Mammary epithelial cell (primary cell): ENCODE measurements at regions of chr1 and their contacts with region 1.

Region 1: GRCh38 chr1:230066466-230067404 is at the start of gene GALNT2:
- DNase-seq: peak; percentile 85
- H3K4me3 ChIP-seq: peak within 1 kb of the TSS; percentile 82 to 85 (median 83)
- H3K27ac ChIP-seq: peak within 1 kb of the TSS; percentile 71
- H3K4me1 ChIP-seq: peaks cover 26% of the 10 kb centered on the region
- H3K27me3 ChIP-seq: no peaks in the 10 kb centered on the region
- CTCF ChIP-seq: no peak
- total RNA-seq, gene GALNT2: 117 to 125 TPM

Region 2: DNA sequence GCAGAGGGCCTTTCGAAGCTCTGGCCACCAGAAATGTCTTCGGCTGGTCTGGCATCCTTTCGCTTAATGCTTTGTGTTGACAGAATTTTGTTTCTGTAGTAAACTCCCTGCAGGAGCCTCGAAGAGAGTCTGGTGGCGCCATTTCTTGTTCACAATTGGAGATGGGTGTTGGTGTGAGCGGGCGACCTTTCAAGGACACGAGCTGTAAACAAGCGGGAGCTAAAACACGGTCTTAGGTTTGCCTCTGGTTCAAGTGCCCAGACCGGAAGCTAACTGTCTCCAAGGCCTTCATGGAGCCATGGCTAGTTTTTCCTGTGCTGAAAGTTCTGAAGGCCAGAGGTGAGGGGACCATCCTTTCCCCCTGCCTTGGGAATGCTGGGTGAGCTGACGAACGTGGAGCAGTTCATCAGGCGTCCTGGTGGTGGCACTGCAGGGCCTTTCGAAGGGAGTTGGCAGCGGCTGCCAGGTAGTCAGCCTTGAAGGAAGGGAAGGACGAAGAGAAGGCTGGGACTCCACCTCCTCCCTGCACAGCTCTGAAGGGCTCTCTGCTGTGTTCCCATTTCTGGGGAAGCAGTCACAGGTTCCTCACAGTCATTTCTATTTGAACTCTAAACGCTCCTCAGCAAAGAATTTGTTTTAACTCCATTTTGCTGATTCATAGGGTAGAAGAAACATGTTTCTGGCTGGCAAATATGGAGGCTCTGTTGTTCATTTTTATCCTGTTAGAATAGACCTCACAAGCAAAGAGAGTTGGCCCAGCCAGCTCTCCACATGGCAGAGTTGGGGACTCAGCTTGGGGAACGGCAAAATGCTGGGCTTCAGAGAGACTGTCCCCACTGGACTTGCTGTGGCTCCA is 405.5 kb before region 1 on chr1:
- CTCF ChIA-PET with region 1: no interaction called
- dilution Hi-C with region 1: no loop called
- in situ Hi-C with region 1: no loop called
- intact Hi-C with region 1: loop called (anchors 1 kb)
- DNase-seq: peak; percentile 51
- H3K4me3 ChIP-seq: no peak overlapping the region
- H3K27ac ChIP-seq: no peak overlapping the region
- H3K4me1 ChIP-seq: peaks cover 8% of the 10 kb centered on the region
- H3K27me3 ChIP-seq: no peaks in the 10 kb centered on the region
- CTCF ChIP-seq: peak; percentile 87 to 96

Region 3: DNA sequence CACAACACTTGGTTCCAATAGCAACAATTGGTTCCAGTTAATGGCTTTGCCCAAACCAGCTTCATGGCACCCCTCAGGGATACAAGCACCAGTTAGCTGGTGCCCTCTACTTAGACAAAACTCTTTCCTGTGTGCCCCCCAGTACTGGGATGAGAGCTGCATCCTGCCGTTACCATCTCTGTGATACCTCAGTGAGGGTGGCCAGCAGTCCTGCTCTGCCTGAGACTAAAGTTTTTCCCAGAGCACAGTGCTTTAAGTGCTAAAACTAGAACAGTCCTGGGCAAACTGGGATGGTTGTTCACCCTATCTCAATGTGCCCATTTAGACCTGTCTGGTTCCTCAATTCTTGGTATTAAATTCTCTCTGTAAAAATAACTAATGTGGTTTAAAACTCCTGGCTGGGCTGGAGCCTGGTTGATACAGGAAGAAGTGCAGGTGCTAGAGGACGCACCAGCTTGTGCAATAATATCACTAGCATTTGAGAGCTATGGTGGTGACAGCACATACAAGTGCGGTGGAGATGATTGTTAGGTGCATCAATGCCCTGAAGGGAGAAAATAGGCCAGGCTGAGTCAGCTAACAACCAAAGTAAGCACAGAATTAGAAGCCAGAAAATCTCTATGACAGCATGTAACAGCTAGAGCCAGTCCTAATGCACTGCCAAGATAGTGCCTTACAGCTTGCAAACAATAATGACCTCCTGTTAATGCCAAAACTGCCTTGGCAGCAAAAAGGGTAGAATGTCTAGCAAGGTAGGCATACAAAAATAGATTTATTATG is 179.5 kb before region 1 on chr1:
- CTCF ChIA-PET with region 1: no interaction called
- dilution Hi-C with region 1: no loop called
- in situ Hi-C with region 1: no loop called
- intact Hi-C with region 1: loop called (anchors 5 kb)
- DNase-seq: peak; percentile 97
- H3K4me3 ChIP-seq: no peak overlapping the region
- H3K27ac ChIP-seq: no peak overlapping the region
- H3K4me1 ChIP-seq: peaks cover 19% of the 10 kb centered on the region
- H3K27me3 ChIP-seq: peaks cover 10% of the 10 kb centered on the region
- CTCF ChIP-seq: no peak

Region 4: GRCh38 chr1:230084138-230084880 is 17.6 kb after region 1 on chr1:
- CTCF ChIA-PET with region 1: no interaction called
- dilution Hi-C with region 1: no loop called
- in situ Hi-C with region 1: no loop called
- intact Hi-C with region 1: loop called (anchors 1 kb)
- DNase-seq: peak; percentile 99
- H3K4me3 ChIP-seq: peak overlapping the region in 2 of 3 experiments; percentile 28 to 38
- H3K27ac ChIP-seq: peak overlapping the region; percentile 96
- H3K4me1 ChIP-seq: peaks cover 52% of the 10 kb centered on the region
- H3K27me3 ChIP-seq: no peaks in the 10 kb centered on the region
- CTCF ChIP-seq: no peak

Region 5: DNA sequence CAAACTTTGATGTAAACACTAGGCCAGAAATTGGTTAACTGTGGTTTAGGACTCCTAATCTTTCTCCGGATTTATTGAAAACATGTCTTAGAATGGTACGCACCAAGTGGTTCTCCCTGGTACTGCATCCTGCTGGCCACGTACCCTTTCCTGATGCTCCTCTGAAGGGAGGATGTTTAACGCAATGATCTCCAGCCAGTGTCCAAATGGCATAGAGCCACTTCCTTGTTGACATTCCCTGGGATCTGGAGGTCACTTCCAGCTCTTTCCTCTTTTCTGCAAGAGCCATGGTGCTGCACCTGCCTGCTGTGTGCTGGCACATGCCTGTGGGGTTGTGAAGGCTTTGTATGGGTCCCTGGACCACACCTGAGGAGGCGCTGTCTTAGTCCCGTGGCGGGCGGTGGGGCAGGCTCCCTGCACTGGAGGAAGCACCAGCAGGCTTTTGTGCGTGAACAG is 54.2 kb after region 1 on chr1:
- CTCF ChIA-PET with region 1: no interaction called
- dilution Hi-C with region 1: no loop called
- in situ Hi-C with region 1: no loop called
- intact Hi-C with region 1: loop called (anchors 5 kb)
- DNase-seq: no peak
- H3K4me3 ChIP-seq: no peak overlapping the region
- H3K27ac ChIP-seq: no peak overlapping the region
- H3K4me1 ChIP-seq: peaks cover 52% of the 10 kb centered on the region
- H3K27me3 ChIP-seq: no peaks in the 10 kb centered on the region
- CTCF ChIP-seq: peak; percentile 50 to 61